ENCODE measurements at regions of chr13 and their contacts with region 1.

Region 1: DNA sequence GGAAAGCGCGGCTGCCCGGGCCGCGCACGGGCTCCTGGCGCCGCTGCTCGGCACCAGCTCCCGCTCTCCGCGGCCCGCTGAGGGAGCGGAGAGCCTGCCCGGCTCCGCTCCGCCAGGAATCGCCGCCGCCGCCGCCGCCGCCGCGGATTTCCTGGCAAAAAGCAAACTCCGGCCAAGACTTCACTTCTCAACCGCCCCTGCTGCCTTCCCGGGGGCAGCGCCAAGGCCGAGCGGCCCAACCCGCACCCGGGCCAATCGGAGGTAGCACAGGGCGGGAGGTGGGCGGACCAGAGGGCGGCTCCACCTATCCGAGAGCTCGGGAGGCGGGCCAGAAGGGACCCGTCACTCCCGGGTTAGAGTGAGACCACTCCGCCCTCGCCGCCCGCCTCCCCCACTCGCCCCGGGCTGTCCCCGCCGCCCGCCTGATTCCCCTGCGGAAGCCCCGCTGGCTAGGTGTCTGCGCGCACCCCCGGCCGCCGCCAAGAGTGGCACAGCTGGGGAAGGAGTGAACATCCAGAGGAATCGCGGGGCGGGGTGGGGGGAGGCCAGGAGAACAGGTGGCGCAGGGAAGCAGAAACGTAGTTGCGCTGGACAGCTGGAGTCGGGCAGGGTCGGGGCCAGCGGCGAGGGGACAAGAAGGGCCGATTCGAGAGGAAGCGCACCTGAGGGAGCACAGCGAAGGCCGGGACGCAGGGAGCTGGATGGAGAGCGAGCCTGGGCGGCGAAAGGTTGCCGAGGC is at the start of gene LNX2:
- DNase-seq: peak; percentile 93
- ATAC-seq: peak; percentile 86
- H3K4me3 ChIP-seq: peak within 1 kb of the TSS; percentile 94
- H3K27ac ChIP-seq: peak within 1 kb of the TSS; percentile 84
- H3K4me1 ChIP-seq: peaks cover 35% of the 10 kb centered on the region
- H3K27me3 ChIP-seq: no peaks in the 10 kb centered on the region
- CTCF ChIP-seq: no peak
- total RNA-seq, gene LNX2: 5.8 and 6.0 TPM in 2 replicates

Region 2: GRCh38 chr13:27449936-27450828 is 170.4 kb before region 1 on chr13 and contains the start of gene MTIF3:
- CTCF ChIA-PET with region 1: no interaction called
- POLR2A ChIA-PET with region 1: no interaction called
- intact Hi-C with region 1: loop called (anchors 2 kb)
- DNase-seq: peak; percentile 96
- ATAC-seq: peak; percentile 85
- H3K4me3 ChIP-seq: peak within 1 kb of the TSS; percentile 93
- H3K27ac ChIP-seq: peak within 1 kb of the TSS; percentile 98
- H3K4me1 ChIP-seq: peaks cover 16% of the 10 kb centered on the region
- H3K27me3 ChIP-seq: no peaks in the 10 kb centered on the region
- CTCF ChIP-seq: no peak
- total RNA-seq, gene MTIF3: 28.2 and 43.9 TPM in 2 replicates

Region 3: DNA sequence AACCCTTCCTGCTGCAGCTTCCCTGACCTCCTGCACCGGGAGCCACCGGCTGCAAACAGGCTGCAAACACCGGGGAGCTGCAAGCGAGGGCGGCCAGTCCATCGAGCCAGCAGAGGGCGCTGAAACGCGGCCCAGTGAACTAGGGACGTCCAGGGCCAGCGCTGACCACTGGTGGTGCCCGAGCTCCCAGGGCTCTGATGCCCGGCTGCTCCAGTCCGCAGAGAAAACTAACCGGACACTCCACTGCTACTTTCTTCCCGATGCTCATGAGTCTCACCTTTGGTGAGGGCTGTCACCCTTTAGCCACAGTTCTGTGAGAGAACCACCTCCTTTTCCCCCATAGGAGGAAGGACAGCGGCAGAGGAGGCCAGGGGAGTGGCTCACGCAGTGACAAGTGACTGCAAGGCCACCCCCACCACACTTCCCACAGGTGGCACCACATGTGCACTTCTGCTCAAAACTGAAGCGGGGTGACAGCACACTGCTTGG is 87.3 kb before region 1 on chr13:
- CTCF ChIA-PET with region 1: interaction called, 8 read pairs
- POLR2A ChIA-PET with region 1: no interaction called
- intact Hi-C with region 1: loop called (anchors 5 kb)
- DNase-seq: peak; percentile 80
- ATAC-seq: peak; percentile 99
- H3K4me3 ChIP-seq: peak overlapping the region; percentile 53; the same call in 1 of the 2 replicates
- H3K27ac ChIP-seq: no peak overlapping the region
- H3K4me1 ChIP-seq: no peaks in the 10 kb centered on the region
- H3K27me3 ChIP-seq: no peaks in the 10 kb centered on the region
- CTCF ChIP-seq: peak; percentile 92

Region 4: DNA sequence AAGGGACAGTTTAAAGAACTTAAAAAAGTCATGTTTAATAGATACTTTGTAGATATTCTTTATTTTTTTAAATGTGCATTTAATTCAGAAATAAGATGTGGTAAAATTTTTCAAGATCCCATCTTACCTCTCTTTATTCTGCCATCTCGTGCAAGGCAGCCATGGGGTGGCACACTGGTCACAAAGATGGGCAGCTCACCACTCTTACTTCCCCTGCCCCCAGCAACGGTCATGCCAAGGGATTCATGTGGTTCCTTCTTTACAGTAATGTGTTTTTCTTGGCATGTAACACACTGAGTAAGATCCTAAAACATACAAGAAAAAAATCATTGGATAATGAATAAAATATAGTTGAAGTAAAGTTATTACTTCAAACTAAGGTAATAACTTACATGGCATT is 64.4 kb before region 1 on chr13:
- CTCF ChIA-PET with region 1: interaction called, 3 read pairs
- POLR2A ChIA-PET with region 1: no interaction called
- intact Hi-C with region 1: loop called (anchors 5 kb)
- DNase-seq: peak; percentile 23
- ATAC-seq: peak; percentile 74
- H3K4me3 ChIP-seq: no peak overlapping the region
- H3K27ac ChIP-seq: no peak overlapping the region
- H3K4me1 ChIP-seq: no peaks in the 10 kb centered on the region
- H3K27me3 ChIP-seq: no peaks in the 10 kb centered on the region
- CTCF ChIP-seq: peak; percentile 45; the same call in 1 of the 2 replicates

Region 5: DNA sequence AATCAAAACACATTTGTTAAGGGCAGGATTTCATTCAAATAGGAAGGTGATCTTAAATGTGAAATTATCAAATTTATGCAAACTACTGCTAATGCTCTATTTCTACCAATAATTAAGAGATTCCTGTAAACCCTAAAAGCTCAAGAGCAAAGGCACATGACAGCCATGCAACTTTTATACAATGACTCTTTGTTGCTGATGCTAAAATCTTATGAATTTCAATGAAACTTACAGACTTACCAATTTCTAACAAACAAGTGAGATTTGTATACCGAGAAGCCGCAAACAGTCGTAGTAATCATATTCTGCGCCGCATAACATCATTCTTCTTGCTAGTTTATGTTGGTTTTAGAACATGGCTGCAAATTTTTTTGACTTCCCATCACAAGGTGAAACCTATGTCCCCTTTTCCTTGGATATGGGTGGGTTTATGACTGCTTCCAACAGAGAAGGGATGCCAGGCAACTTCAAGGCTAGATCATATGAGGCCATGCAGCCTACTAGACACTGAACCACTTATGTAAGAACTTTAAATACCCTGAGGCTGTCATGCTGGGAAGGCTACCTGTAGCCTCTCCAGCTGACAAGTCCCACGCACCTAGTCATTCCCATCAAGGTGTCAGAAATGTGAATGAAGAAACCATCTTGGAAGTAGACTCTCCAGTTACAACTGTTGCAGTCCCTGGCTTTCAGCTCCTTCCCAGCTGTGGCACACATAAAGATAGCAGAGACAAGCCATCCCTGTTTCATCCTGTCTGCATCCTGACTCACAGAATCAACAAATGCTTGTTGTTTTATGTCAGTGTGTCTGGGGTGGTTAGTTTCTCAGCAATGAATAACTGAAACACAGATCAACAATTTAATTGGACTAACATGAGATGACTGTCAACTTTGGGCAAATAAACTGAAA is 42.2 kb before region 1 on chr13:
- CTCF ChIA-PET with region 1: no interaction called
- POLR2A ChIA-PET with region 1: no interaction called
- intact Hi-C with region 1: loop called (anchors 2 kb)
- DNase-seq: peak; percentile 78
- ATAC-seq: peak; percentile 98
- H3K4me3 ChIP-seq: no peak overlapping the region
- H3K27ac ChIP-seq: peak overlapping the region; percentile 43
- H3K4me1 ChIP-seq: peaks cover 41% of the 10 kb centered on the region
- H3K27me3 ChIP-seq: no peaks in the 10 kb centered on the region
- CTCF ChIP-seq: no peak

Region 6: DNA sequence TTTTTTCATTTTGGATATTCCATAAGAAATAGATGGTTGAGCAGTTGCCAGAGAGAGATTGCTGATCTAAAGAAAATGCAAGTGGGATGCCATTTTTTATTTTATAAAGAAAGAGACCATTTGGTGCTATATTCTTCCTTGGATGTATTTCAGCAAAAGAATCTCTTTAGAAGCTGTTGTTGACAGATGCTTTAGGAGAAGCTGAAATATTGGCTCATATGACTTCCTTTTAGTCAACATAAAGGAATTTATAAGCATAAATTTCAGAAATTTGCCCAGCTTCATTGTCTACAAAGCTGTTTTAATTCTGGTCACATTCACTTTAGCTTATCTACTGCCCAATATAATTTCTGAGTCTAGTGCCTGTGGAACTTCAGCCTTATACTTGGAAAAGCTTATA is 38.0 kb after region 1 on chr13:
- CTCF ChIA-PET with region 1: no interaction called
- POLR2A ChIA-PET with region 1: no interaction called
- intact Hi-C with region 1: loop called (anchors 5 kb)
- DNase-seq: peak; percentile 57
- ATAC-seq: peak; percentile 77
- H3K4me3 ChIP-seq: no peak overlapping the region
- H3K27ac ChIP-seq: peak overlapping the region; percentile 28; the same call in 1 of the 2 replicates
- H3K4me1 ChIP-seq: peaks cover 30% of the 10 kb centered on the region
- H3K27me3 ChIP-seq: no peaks in the 10 kb centered on the region
- CTCF ChIP-seq: no peak

Region 7: GRCh38 chr13:27728271-27728670 is 107.7 kb after region 1 on chr13:
- CTCF ChIA-PET with region 1: no interaction called
- POLR2A ChIA-PET with region 1: no interaction called
- intact Hi-C with region 1: no loop called
- DNase-seq: peak; percentile 5
- ATAC-seq: no peak; the same call in 1 of the 2 replicates
- H3K4me3 ChIP-seq: no peak overlapping the region
- H3K27ac ChIP-seq: no peak overlapping the region
- H3K4me1 ChIP-seq: no peaks in the 10 kb centered on the region
- H3K27me3 ChIP-seq: 0 out of 2 replicates have a peak, but pooled peaks cover 10% of the 10 kb centered on the region
- CTCF ChIP-seq: no peak; the same call in 1 of the 2 replicates

Measured in PC-3 (cell line).